CD8-positive, alpha-beta T cell (primary cell): ENCODE measurements at regions of chr4 and their contacts with region 1.

Region 1: GRCh38 chr4:88523325-88524129 is at the start of gene PYURF:
- DNase-seq: peak; percentile 31 to 87 (median 75)
- ATAC-seq: peak; percentile 76
- H3K4me3 ChIP-seq: peak within 1 kb of the TSS; percentile 78 to 90
- H3K4me3 Mint-ChIP-seq: peak within 1 kb of the TSS; percentile 93
- H3K27ac ChIP-seq: peak within 1 kb of the TSS; percentile 54 to 76
- H3K27ac Mint-ChIP-seq: peak within 1 kb of the TSS; percentile 94
- H3K4me1 ChIP-seq: peaks cover 16% of the 10 kb centered on the region
- H3K4me1 Mint-ChIP-seq: peaks cover 43% of the 10 kb centered on the region
- H3K27me3 ChIP-seq: no peaks in the 10 kb centered on the region
- H3K27me3 Mint-ChIP-seq: no peaks in the 10 kb centered on the region
- CTCF ChIP-seq: no peak
- total RNA-seq, gene PYURF: 25.5 to 27.6 TPM

Region 2: GRCh38 chr4:88378691-88379559 is 144.6 kb before region 1 on chr4 and contains the start of gene HERC6:
- CTCF ChIA-PET with region 1: no interaction called
- POLR2A ChIA-PET with region 1: no interaction called
- intact Hi-C with region 1: loop called in 1 of 2 experiments (anchors 2 kb)
- DNase-seq: peak; percentile 39 to 93 (median 73)
- ATAC-seq: peak; percentile 63
- H3K4me3 ChIP-seq: peak within 1 kb of the TSS; percentile 82 to 98
- H3K4me3 Mint-ChIP-seq: peak within 1 kb of the TSS; percentile 96
- H3K27ac ChIP-seq: peak within 1 kb of the TSS; percentile 88 to 91
- H3K27ac Mint-ChIP-seq: peak within 1 kb of the TSS; percentile 95
- H3K4me1 ChIP-seq: peaks cover 31% of the 10 kb centered on the region
- H3K4me1 Mint-ChIP-seq: peaks cover 43% of the 10 kb centered on the region
- H3K27me3 ChIP-seq: no peaks in the 10 kb centered on the region
- H3K27me3 Mint-ChIP-seq: no peaks in the 10 kb centered on the region
- CTCF ChIP-seq: peak; percentile 57
- total RNA-seq, gene HERC6: 8.2 TPM

Region 3: GRCh38 chr4:88481537-88481936 is 42.0 kb before region 1 on chr4:
- CTCF ChIA-PET with region 1: no interaction called
- POLR2A ChIA-PET with region 1: no interaction called
- intact Hi-C with region 1: no loop called
- DNase-seq: no peak
- ATAC-seq: no peak
- H3K4me3 ChIP-seq: no peak overlapping the region
- H3K4me3 Mint-ChIP-seq: no peak overlapping the region
- H3K27ac ChIP-seq: no peak overlapping the region
- H3K27ac Mint-ChIP-seq: no peak overlapping the region
- H3K4me1 ChIP-seq: no peaks in the 10 kb centered on the region
- H3K4me1 Mint-ChIP-seq: no peaks in the 10 kb centered on the region
- H3K27me3 ChIP-seq: no peaks in the 10 kb centered on the region
- H3K27me3 Mint-ChIP-seq: no peaks in the 10 kb centered on the region
- CTCF ChIP-seq: no peak

Region 4: DNA sequence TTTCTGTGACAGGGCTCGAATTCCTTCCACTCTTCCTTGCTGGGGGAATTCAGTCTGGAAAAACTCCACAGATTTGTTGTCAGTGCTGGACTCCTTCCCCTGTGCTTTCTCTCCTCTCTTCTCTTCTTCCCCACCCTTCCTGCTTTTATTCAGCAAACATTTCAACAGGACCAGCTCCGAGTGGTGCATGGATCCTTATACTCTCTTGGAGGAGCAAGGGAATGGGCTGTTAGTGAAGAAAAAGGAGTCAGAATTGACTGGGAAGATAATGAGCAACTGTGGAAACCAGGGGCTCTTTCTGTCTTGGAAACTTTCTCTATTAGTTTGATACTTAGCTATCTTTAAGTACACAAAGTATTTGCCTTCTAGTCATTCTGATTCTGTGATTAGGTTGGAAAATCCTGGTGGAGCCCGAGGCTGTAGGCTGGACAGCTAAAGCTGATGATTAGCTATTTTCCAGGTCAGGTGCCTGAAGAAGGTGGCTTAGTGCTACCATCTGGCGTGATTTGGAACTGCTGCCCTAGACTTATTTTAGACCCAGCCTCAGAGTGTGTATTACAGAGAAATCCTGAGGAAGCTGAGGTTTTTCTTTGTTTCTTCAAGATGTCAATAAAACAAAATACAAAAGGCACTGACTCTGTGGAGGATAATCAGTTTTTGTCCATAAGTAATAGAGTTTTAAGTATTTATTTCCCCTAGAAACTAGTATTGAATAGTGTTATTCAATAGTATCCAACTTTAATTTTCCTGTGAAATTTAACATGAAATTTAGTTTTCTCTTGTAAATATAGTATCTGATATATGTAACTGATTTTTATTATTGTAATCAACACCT is 135.7 kb after region 1 on chr4:
- CTCF ChIA-PET with region 1: interaction called, 9 read pairs
- POLR2A ChIA-PET with region 1: no interaction called
- intact Hi-C with region 1: loop called (anchors 1 to 2 kb)
- DNase-seq: peak in 5 of 9 experiments; percentile 30 to 62 (median 40)
- ATAC-seq: peak; percentile 78
- H3K4me3 ChIP-seq: no peak overlapping the region
- H3K4me3 Mint-ChIP-seq: no peak overlapping the region
- H3K27ac ChIP-seq: no peak overlapping the region
- H3K27ac Mint-ChIP-seq: peak overlapping the region; percentile 10
- H3K4me1 ChIP-seq: no peaks in the 10 kb centered on the region
- H3K4me1 Mint-ChIP-seq: peaks cover 2% of the 10 kb centered on the region
- H3K27me3 ChIP-seq: no peaks in the 10 kb centered on the region
- H3K27me3 Mint-ChIP-seq: no peaks in the 10 kb centered on the region
- CTCF ChIP-seq: peak; percentile 72